GM12878 (cell line): ENCODE measurements at regions of chr11 and their contacts with region 1.

Region 1: DNA sequence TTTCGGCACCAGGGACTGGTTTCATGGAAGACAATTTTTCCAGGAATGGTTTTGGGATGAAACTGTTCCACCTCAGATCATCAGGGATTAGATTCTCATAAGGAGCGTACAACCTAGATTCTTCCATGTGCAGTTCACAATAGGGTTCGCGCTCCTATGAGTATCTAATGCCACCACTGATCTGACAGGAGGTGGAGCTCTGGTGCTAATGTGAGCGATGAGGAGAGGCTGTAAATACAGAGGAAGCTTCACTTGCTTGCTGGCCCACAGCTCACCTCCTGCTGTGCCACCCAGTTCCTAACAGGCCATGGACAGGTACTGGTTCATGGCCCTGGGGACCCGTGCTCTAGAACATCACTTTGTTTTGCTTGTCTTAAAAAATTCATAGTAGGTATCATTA is 41.8 kb upstream of the AMPD3 start:
- DNase-seq: no peak
- ATAC-seq: peak; percentile 94
- H3K4me3 ChIP-seq: no peak overlapping the region
- H3K27ac ChIP-seq: no peak overlapping the region
- H3K4me1 ChIP-seq: peaks cover 7% of the 10 kb centered on the region; the same call in 1 of the 2 replicates
- H3K27me3 ChIP-seq: no peaks in the 10 kb centered on the region; a peak in 1 of 4 replicates
- CTCF ChIP-seq: peak; percentile 44 to 50 (median 49); a peak in 4 of 6 replicates
- EP300 ChIP-seq: no peak
- POLR2A ChIP-seq: no peak
- RAD21 ChIP-seq: peak; percentile 89

Region 2: DNA sequence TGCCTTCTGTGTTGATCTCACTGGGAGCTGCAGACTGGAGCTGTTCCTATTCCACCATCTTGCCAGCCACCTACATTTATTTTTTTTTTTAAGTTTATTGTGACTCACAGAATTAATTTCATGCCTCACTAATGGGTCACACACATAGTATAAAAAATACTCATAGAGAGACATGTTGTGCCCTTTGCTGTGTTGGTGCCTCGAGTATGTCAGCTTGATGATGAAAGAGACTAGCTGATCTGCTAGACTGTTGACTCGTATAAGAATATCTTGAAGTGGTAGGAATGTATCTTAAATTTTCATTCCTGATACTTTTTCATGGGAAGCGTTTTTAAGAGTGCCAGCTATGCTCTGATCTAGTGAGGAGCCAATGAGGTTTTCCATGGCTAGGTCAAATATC is 13.2 kb after region 1 on chr11:
- CTCF ChIA-PET with region 1: interaction called, 4 read pairs
- POLR2A ChIA-PET with region 1: interaction called, 3 read pairs
- RAD21 ChIA-PET with region 1: interaction called, 18 read pairs
- SMC1A ChIA-PET with region 1: interaction called, 25 read pairs
- in situ Hi-C with region 1: no loop called
- intact Hi-C with region 1: no loop called
- DNase-seq: no peak
- ATAC-seq: no peak
- H3K4me3 ChIP-seq: no peak overlapping the region
- H3K27ac ChIP-seq: no peak overlapping the region
- H3K4me1 ChIP-seq: no peaks in the 10 kb centered on the region
- H3K27me3 ChIP-seq: no peaks in the 10 kb centered on the region; a peak in 3 of 4 replicates
- CTCF ChIP-seq: no peak
- EP300 ChIP-seq: no peak
- POLR2A ChIP-seq: no peak
- RAD21 ChIP-seq: no peak

Region 3: DNA sequence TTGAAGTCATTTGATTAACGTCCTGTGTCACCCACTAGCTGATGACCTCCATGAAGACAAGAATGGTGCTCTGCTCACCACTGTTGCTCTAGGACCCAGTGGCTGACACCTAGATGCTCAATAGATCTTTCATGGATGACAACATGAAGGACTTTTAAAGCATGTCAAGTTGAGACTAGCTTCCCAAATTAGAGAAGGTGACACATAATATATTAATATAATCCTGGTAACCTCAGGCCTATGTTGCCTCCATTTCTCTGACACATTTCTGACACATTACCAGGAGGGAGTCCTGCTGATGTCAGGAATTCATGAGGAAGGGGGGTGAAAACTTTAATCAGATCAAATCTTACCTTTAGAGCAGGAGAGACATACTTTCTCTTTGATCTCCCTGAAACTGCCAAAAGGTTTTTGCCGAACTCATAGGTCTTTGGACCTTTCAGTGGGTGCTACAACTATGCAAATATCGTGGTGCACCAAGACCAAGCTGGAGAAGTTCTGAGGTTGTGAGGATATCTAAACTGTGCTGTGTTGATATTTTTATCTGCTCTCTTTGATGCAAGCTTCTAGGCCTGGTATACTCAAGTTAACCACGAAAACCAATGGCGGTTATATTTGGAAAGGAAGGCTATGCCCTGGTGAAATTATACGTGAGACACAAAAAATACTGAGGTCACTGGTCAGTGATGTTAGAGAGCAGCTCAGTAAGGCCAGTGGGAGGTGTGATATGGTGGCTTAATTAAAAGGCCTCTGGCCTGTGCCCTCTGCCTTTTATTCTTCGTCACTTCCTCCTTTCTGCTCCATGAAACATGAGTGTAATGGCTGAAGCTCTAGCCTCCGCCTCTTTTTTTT is 28.6 kb after region 1 on chr11:
- CTCF ChIA-PET with region 1: interaction called, 8 read pairs
- POLR2A ChIA-PET with region 1: no interaction called
- RAD21 ChIA-PET with region 1: interaction called, 13 read pairs
- SMC1A ChIA-PET with region 1: interaction called, 15 read pairs
- in situ Hi-C with region 1: no loop called
- intact Hi-C with region 1: no loop called
- DNase-seq: peak; percentile 82
- ATAC-seq: peak; percentile 96
- H3K4me3 ChIP-seq: no peak overlapping the region
- H3K27ac ChIP-seq: no peak overlapping the region; the same call in 1 of the 2 replicates
- H3K4me1 ChIP-seq: peaks cover 18% of the 10 kb centered on the region
- H3K27me3 ChIP-seq: peaks cover 0 to 3% of the 10 kb centered on the region in 2 experiments; a peak in 1 of 4 replicates
- CTCF ChIP-seq: no peak
- EP300 ChIP-seq: peak; percentile 72 to 88; a peak in 3 of 4 replicates
- POLR2A ChIP-seq: no peak
- RAD21 ChIP-seq: no peak

Region 4: GRCh38 chr11:10490398-10491241 is 77.4 kb after region 1 on chr11:
- CTCF ChIA-PET with region 1: interaction called, 3 read pairs
- POLR2A ChIA-PET with region 1: no interaction called
- RAD21 ChIA-PET with region 1: interaction called, 13 read pairs
- SMC1A ChIA-PET with region 1: interaction called, 10 read pairs
- in situ Hi-C with region 1: no loop called
- intact Hi-C with region 1: no loop called
- DNase-seq: no peak
- ATAC-seq: no peak
- H3K4me3 ChIP-seq: no peak overlapping the region
- H3K27ac ChIP-seq: no peak overlapping the region
- H3K4me1 ChIP-seq: peaks cover 14% of the 10 kb centered on the region
- H3K27me3 ChIP-seq: no peaks in the 10 kb centered on the region
- CTCF ChIP-seq: no peak
- EP300 ChIP-seq: no peak
- POLR2A ChIP-seq: no peak
- RAD21 ChIP-seq: no peak

Region 5: GRCh38 chr11:10540923-10541560 is 127.8 kb after region 1 on chr11 and contains the start of gene RNF141:
- CTCF ChIA-PET with region 1: interaction called, 21 read pairs
- POLR2A ChIA-PET with region 1: no interaction called
- RAD21 ChIA-PET with region 1: interaction called, 21 read pairs
- SMC1A ChIA-PET with region 1: interaction called, 25 read pairs
- in situ Hi-C with region 1: no loop called
- intact Hi-C with region 1: loop called (anchors 2 kb)
- DNase-seq: peak; percentile 60
- ATAC-seq: peak; percentile 99
- H3K4me3 ChIP-seq: peak within 1 kb of the TSS; percentile 64
- H3K27ac ChIP-seq: peak within 1 kb of the TSS; percentile 22; the same call in 1 of the 2 replicates
- H3K4me1 ChIP-seq: peaks cover 5% of the 10 kb centered on the region
- H3K27me3 ChIP-seq: peaks cover 0 to 5% of the 10 kb centered on the region in 2 experiments; a peak in 1 of 4 replicates
- CTCF ChIP-seq: peak; percentile 80 to 93 (median 91); a peak in 5 of 6 replicates
- EP300 ChIP-seq: no peak
- POLR2A ChIP-seq: peak; percentile 98
- RAD21 ChIP-seq: peak; percentile 47
- polyA plus RNA-seq, gene RNF141: 21.2 to 36.8 TPM

Region 6: GRCh38 chr11:10641177-10641911 is 228.1 kb after region 1 on chr11:
- CTCF ChIA-PET with region 1: interaction called, 8 read pairs
- POLR2A ChIA-PET with region 1: no interaction called
- RAD21 ChIA-PET with region 1: interaction called, 3 read pairs
- SMC1A ChIA-PET with region 1: interaction called, 28 read pairs
- in situ Hi-C with region 1: no loop called
- intact Hi-C with region 1: no loop called
- DNase-seq: peak; percentile 62
- ATAC-seq: peak; percentile 95
- H3K4me3 ChIP-seq: no peak overlapping the region
- H3K27ac ChIP-seq: peak overlapping the region; percentile 92
- H3K4me1 ChIP-seq: peaks cover 33% of the 10 kb centered on the region
- H3K27me3 ChIP-seq: no peaks in the 10 kb centered on the region
- CTCF ChIP-seq: no peak
- EP300 ChIP-seq: peak; percentile 47 to 71; a peak in 1 of 4 replicates
- POLR2A ChIP-seq: no peak
- RAD21 ChIP-seq: 0 out of 2 replicates have a peak, but pooled peaks have one; percentile 5

Region 7: GRCh38 chr11:10716127-10716526 is 302.9 kb after region 1 on chr11:
- CTCF ChIA-PET with region 1: no interaction called
- POLR2A ChIA-PET with region 1: no interaction called
- RAD21 ChIA-PET with region 1: no interaction called
- SMC1A ChIA-PET with region 1: no interaction called
- in situ Hi-C with region 1: no loop called
- intact Hi-C with region 1: no loop called
- DNase-seq: no peak
- ATAC-seq: no peak
- H3K4me3 ChIP-seq: no peak overlapping the region
- H3K27ac ChIP-seq: no peak overlapping the region
- H3K4me1 ChIP-seq: no peaks in the 10 kb centered on the region
- H3K27me3 ChIP-seq: no peaks in the 10 kb centered on the region; a peak in 1 of 4 replicates
- CTCF ChIP-seq: no peak
- EP300 ChIP-seq: no peak
- POLR2A ChIP-seq: no peak
- RAD21 ChIP-seq: no peak

Region 8: GRCh38 chr11:10728789-10729472 is 315.7 kb after region 1 on chr11:
- CTCF ChIA-PET with region 1: interaction called, 9 read pairs
- POLR2A ChIA-PET with region 1: no interaction called
- RAD21 ChIA-PET with region 1: interaction called, 5 read pairs
- SMC1A ChIA-PET with region 1: interaction called, 11 read pairs
- in situ Hi-C with region 1: no loop called
- intact Hi-C with region 1: no loop called
- DNase-seq: no peak
- ATAC-seq: no peak
- H3K4me3 ChIP-seq: no peak overlapping the region
- H3K27ac ChIP-seq: no peak overlapping the region
- H3K4me1 ChIP-seq: peaks cover 6% of the 10 kb centered on the region
- H3K27me3 ChIP-seq: no peaks in the 10 kb centered on the region; a peak in 2 of 4 replicates
- CTCF ChIP-seq: no peak
- EP300 ChIP-seq: no peak
- POLR2A ChIP-seq: no peak
- RAD21 ChIP-seq: no peak